Activated CD4-positive, alpha-beta memory T cell treated with anti-CD3 and anti-CD28 coated beads, Interleukin-2, amount 10 ng/mL, durations not matched to agents 7 days and 5 days (primary cell): ENCODE measurements at regions of chr3 and their contacts with region 1.

Region 1: DNA sequence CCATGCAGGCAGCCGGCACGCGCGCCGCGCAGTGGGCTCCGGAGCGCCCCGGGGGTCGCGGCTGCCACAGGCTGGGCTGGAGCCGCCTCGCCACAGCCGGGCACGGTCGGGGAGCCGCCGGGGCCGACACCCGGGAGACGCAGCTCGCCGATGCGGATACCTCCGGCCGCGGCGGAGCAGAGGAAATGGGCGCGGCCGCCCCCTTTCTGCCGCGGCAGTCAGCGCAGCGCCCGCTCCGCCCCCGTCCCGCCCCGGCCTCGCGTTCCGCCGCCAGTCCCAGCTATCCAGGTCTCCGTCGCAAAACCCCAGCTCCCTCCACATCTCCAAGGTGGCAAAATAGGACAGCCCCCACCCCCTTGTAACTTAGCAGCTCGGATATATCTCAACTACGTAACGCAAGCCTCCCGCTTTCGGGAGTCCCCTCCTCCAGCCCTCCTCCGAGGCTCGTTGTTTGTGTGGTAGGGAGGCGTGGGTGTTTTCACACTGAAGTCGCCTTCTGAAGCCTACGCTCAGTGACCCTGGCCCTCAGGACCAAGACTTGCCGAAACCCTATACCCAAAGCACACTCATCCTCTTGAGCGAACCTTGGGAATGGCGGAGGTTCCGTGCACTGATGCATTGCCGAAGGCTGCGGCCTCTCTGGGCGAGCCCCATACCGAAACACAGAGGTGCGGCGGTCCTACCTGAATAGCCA is at the start of gene SH3BP5:
- DNase-seq: peak; percentile 80
- H3K4me3 Mint-ChIP-seq: peak within 1 kb of the TSS; percentile 85
- H3K27ac Mint-ChIP-seq: peak within 1 kb of the TSS; percentile 73
- H3K4me1 Mint-ChIP-seq: peaks cover 58% of the 10 kb centered on the region
- H3K27me3 Mint-ChIP-seq: no peaks in the 10 kb centered on the region
- total RNA-seq, gene SH3BP5: 39.0 to 40.9 TPM

Region 2: GRCh38 chr3:15284121-15284889 is 48.2 kb before region 1 on chr3:
- CTCF ChIA-PET with region 1: interaction called, 10 read pairs
- POLR2A ChIA-PET with region 1: no interaction called
- DNase-seq: no peak
- H3K4me3 Mint-ChIP-seq: no peak overlapping the region
- H3K27ac Mint-ChIP-seq: peak overlapping the region; percentile 1
- H3K4me1 Mint-ChIP-seq: peaks cover 49% of the 10 kb centered on the region
- H3K27me3 Mint-ChIP-seq: no peaks in the 10 kb centered on the region

Region 3: DNA sequence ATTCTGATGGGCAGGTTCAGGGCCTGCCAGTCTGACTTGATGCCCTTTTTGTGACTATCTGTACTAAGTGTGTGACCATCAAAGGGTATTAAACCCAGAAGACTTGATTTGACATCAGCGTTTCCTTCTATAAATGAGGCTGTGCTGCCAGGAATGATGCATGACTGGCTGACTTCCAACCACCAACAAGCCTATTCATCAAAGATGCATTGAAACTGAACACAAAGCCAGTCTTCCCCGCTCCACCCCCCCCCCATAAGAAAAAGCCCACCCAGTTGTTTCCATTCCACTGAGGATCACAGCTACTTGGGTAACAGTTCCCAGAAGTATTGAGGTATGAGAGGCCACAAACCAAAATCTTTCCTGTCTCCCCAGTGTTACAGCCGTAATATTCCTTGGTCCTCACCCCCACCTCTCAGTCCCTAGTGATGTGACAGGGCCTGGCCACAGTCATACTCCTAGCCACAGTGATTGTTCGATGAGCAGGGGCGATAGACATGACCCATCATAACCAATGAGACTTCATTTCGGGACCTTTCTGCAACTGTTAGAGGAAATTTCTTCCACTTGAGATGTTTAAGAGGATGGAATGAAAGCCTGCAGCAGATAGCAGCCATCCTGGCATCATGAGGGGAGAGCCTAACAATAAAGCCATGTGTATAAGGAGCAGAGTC is 22.8 kb before region 1 on chr3:
- CTCF ChIA-PET with region 1: interaction called, 18 read pairs
- POLR2A ChIA-PET with region 1: interaction called, 17 read pairs
- DNase-seq: no peak
- H3K4me3 Mint-ChIP-seq: peak overlapping the region; percentile 19
- H3K27ac Mint-ChIP-seq: peak overlapping the region; percentile 89
- H3K4me1 Mint-ChIP-seq: peaks cover 71% of the 10 kb centered on the region
- H3K27me3 Mint-ChIP-seq: no peaks in the 10 kb centered on the region

Region 4: GRCh38 chr3:15356186-15356585 is 23.6 kb after region 1 on chr3:
- CTCF ChIA-PET with region 1: interaction called, 13 read pairs
- POLR2A ChIA-PET with region 1: interaction called, 12 read pairs
- DNase-seq: no peak
- H3K4me3 Mint-ChIP-seq: peak overlapping the region; percentile 46
- H3K27ac Mint-ChIP-seq: peak overlapping the region; percentile 88
- H3K4me1 Mint-ChIP-seq: peaks cover 51% of the 10 kb centered on the region
- H3K27me3 Mint-ChIP-seq: no peaks in the 10 kb centered on the region

Region 5: GRCh38 chr3:15377961-15378791 is 45.6 kb after region 1 on chr3:
- CTCF ChIA-PET with region 1: interaction called, 13 read pairs
- POLR2A ChIA-PET with region 1: no interaction called
- DNase-seq: peak; percentile 97
- H3K4me3 Mint-ChIP-seq: no peak overlapping the region
- H3K27ac Mint-ChIP-seq: peak overlapping the region; percentile 73
- H3K4me1 Mint-ChIP-seq: peaks cover 8% of the 10 kb centered on the region
- H3K27me3 Mint-ChIP-seq: no peaks in the 10 kb centered on the region